ENCODE measurements at regions of chrX and their contacts with region 1.

Region 1: GRCh38 chrX:69216911-69217310 is 51.7 kb upstream of the PJA1 start:
- DNase-seq: no peak
- H3K4me3 ChIP-seq: no peak overlapping the region
- H3K27ac ChIP-seq: peak overlapping the region in 1 of 4 donors; percentile 14
- H3K4me1 ChIP-seq: peaks cover 3 to 18% (median 4%) of the 10 kb centered on the region in 3 donors
- H3K27me3 ChIP-seq: no peaks in the 10 kb centered on the region
- CTCF ChIP-seq: no peak
- POLR2A ChIP-seq: no peak

Region 2: DNA sequence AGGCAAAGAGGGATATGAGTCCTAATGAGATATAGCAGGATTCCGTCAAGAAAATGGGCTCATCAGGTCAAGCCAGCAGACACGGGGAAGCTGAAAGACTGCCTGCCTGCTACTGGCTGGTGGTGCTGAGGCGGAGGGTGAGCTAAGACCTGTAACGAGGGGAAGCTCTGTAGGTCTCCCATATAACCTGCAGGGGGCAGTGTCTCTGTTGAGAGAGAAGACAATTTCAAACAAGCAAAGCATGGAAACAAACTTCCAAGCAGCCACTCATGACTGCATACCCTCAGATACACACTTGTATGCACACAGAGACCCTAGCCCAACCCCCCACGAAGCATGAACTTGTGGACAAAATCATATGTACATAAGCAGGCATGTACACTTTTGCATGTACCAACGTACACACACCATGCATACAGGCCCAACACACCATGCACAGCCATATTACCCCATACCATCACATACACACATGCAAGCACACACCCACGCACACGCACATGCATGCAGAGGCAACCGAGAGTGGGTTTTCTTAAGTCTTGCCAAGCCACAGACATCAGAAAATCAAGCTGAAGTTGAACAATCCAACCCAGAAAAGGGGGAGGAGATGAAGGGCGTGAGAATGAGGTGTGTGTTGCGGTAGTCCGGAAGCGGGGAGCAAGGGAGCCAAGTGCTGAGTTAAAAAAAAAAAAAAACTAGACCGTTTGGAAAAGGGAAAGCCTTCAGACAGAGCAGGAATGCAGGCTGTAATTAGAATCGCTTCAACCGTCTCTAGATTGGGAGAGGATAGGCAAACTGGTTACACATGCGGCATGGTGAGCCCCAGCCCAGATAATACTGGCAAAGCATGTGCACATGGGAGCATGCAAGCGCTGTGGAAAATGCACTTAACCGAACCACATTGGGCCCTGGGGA is 122.7 kb before region 1 on chrX:
- intact Hi-C with region 1: loop called (anchors 10 kb)
- DNase-seq: no peak
- H3K4me3 ChIP-seq: no peak overlapping the region
- H3K27ac ChIP-seq: no peak overlapping the region
- H3K4me1 ChIP-seq: peaks cover 0 to 4% (median 0%) of the 10 kb centered on the region in 3 donors
- H3K27me3 ChIP-seq: no peaks in the 10 kb centered on the region
- CTCF ChIP-seq: peak in 5 of 6 experiments; percentile 31 to 57 (median 45)
- POLR2A ChIP-seq: no peak

Region 3: DNA sequence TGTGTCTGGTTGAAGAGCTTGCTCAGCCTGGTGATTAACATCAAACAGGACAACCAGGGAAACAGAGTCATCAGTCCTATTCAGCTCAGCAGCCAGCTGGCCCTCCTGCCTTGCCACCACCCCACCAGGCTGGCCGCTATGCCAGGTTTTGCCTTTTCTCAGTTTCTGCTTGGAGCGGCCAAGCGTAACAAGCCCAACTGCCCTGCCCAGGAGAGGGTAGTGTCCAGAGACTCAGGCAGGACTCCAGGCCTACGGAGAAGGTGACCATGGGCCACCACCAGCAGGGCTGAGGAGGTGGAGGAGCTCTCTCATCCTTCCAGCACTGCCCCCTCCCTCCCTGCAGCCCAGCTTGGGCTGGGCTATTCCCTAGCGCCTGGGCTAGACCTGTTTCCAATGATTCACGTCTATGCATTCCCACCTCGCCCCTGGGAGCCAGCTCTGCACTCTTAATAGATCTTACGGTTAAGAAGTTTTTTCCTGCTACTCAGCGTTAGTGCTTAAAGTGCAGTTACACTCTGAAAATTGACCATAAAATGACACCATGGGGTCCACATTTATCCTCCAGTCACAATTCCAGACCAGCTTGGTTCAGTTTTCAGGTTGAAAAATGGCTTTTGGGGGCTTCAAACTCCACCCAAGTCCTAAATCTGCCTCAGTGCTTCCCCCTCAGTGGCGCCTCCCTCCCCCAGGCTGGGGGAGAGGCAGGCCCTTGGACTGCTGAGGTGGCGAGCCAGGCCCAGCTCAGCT is 72.3 kb after region 1 on chrX:
- intact Hi-C with region 1: no loop called
- DNase-seq: no peak
- H3K4me3 ChIP-seq: no peak overlapping the region
- H3K27ac ChIP-seq: no peak overlapping the region
- H3K4me1 ChIP-seq: peaks cover 6 to 17% (median 11%) of the 10 kb centered on the region in 3 donors
- H3K27me3 ChIP-seq: peaks cover 0 to 4% (median 0%) of the 10 kb centered on the region in 4 donors
- CTCF ChIP-seq: no peak
- POLR2A ChIP-seq: no peak

Region 4: GRCh38 chrX:69387567-69388487 is 170.9 kb after region 1 on chrX:
- intact Hi-C with region 1: no loop called
- DNase-seq: no peak
- H3K4me3 ChIP-seq: no peak overlapping the region
- H3K27ac ChIP-seq: no peak overlapping the region
- H3K4me1 ChIP-seq: peaks cover 0 to 3% (median 0%) of the 10 kb centered on the region in 3 donors
- H3K27me3 ChIP-seq: no peaks in the 10 kb centered on the region
- CTCF ChIP-seq: peak in 5 of 6 experiments; percentile 42 to 66 (median 62)
- POLR2A ChIP-seq: no peak

Region 5: GRCh38 chrX:69746051-69746450 is 529.1 kb after region 1 on chrX:
- intact Hi-C with region 1: no loop called
- DNase-seq: no peak
- H3K4me3 ChIP-seq: no peak overlapping the region
- H3K27ac ChIP-seq: no peak overlapping the region
- H3K4me1 ChIP-seq: no peaks in the 10 kb centered on the region
- H3K27me3 ChIP-seq: no peaks in the 10 kb centered on the region
- CTCF ChIP-seq: no peak
- POLR2A ChIP-seq: no peak